ENCODE measurements at regions of chr10 and their contacts with region 1.

Region 1: DNA sequence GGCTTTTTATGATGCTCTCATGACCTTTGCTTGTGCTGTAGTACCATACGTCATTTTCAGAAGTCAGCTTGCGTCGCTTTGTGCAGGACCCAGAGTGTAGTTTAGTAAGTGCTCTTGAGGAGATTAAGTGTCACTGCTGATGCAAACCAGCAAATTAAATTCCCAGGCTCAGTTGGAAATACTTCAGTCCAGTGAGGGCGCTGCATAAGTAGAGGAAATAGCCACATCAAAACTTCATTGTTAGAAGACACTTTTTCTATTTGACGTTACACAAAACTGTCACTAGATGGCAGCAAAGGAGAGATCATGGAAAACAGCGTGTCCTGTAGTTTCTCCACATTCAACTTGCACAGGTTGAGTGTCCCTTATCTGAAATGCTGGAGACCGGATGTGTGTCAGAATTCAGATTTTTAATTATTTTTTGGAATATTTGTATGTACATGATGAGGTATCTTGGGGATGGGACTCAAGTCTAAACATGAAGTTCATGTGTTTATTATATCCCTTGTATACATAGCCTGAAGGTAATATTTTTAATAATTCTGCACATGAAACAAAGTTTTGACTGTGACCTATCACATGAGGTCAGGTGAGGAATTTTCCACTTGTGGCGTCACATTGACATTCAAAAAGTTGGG is 7.9 kb downstream of the ZNF22 start:
- DNase-seq: no peak
- ATAC-seq: peak; percentile 64 to 92 (median 86)
- H3K4me3 ChIP-seq: no peak overlapping the region
- H3K27ac ChIP-seq: no peak overlapping the region
- H3K4me1 ChIP-seq: peaks cover 0 to 20% (median 3%) of the 10 kb centered on the region in 12 donors
- H3K27me3 ChIP-seq: no peaks in the 10 kb centered on the region
- CTCF ChIP-seq: peak; percentile 65 to 93 (median 82)
- POLR2A ChIP-seq: no peak

Region 2: DNA sequence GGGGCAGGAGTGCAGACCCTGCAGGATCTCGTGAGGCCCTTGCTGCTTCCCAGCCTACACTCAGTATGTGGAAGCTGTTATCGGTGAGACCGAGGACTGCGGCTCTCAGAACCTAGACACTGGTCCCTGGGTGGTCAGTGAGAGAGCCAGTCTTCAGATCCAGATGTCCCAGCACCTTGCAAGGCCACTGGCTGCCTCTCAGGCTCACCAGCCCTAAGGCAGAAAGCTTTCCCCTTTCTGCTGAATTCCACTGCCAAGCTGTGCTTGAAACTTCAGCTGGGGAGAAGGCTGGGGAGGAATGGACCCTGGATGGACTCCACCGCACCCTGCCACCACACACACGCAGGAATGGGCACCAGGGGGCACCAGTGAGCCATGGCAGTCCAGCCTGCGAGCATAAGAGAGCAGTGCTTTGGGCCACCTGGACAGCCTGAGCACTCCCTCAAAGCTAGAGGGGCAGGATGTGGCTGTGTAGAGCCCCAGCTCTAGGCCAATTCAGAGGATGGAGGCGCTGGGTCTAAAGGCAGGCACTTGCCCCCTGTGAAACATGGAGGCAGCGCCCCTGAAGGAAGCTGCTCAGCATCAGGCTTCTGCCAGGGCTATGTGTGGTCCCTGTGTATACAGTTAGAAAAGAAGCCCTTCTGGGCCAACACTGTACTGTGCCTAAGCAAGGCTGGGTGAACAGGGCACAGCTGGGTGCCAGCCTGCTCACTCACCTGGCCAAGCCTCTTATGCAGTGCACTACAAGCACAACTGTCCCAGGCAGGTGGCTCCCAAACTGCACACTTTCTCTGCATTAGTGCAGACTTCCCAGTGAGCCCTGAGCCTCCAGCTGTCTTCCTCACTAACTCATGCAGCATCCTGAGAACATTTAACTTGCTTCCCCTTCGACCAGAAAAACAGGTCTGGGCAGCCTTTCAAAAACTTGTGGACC is 75.9 kb before region 1 on chr10:
- intact Hi-C with region 1: loop called in 2 of 10 experiments (anchors 2 kb)
- DNase-seq: peak; percentile 89 to 96 (median 92)
- ATAC-seq: peak; percentile 72 to 92 (median 90)
- H3K4me3 ChIP-seq: no peak overlapping the region
- H3K27ac ChIP-seq: peak overlapping the region in 2 of 12 donors; percentile 21 to 31
- H3K4me1 ChIP-seq: peaks cover 0 to 54% (median 39%) of the 10 kb centered on the region in 12 donors
- H3K27me3 ChIP-seq: no peaks in the 10 kb centered on the region
- CTCF ChIP-seq: peak; percentile 92 to 99 (median 98)
- POLR2A ChIP-seq: no peak

Region 3: GRCh38 chr10:44981172-44982113 is 27.2 kb before region 1 on chr10:
- intact Hi-C with region 1: no loop called
- DNase-seq: peak in 4 of 5 donors; percentile 60 to 79 (median 71)
- ATAC-seq: peak; percentile 14 to 61 (median 45)
- H3K4me3 ChIP-seq: no peak overlapping the region
- H3K27ac ChIP-seq: peak overlapping the region; percentile 63 to 97 (median 87)
- H3K4me1 ChIP-seq: peaks cover 14 to 100% (median 89%) of the 10 kb centered on the region in 12 donors
- H3K27me3 ChIP-seq: no peaks in the 10 kb centered on the region
- CTCF ChIP-seq: no peak
- POLR2A ChIP-seq: no peak

Region 4: GRCh38 chr10:45420453-45421192 is 412.0 kb after region 1 on chr10:
- intact Hi-C with region 1: loop called in 1 of 10 experiments (anchors 10 kb)
- DNase-seq: peak; percentile 78 to 91 (median 87)
- ATAC-seq: peak; percentile 11 to 61 (median 47)
- H3K4me3 ChIP-seq: peak overlapping the region in 6 of 12 donors; percentile 59 to 77 (median 72)
- H3K27ac ChIP-seq: peak overlapping the region; percentile 77 to 99 (median 92)
- H3K4me1 ChIP-seq: peaks cover 5 to 72% (median 24%) of the 10 kb centered on the region in 12 donors
- H3K27me3 ChIP-seq: no peaks in the 10 kb centered on the region
- CTCF ChIP-seq: no peak
- POLR2A ChIP-seq: no peak

Region 5: GRCh38 chr10:45594276-45595106 is 585.8 kb after region 1 on chr10:
- intact Hi-C with region 1: loop called in 1 of 10 experiments (anchors 10 kb)
- DNase-seq: peak; percentile 93 to 97 (median 95)
- ATAC-seq: peak; percentile 97 to 99 (median 98)
- H3K4me3 ChIP-seq: peak overlapping the region; percentile 63 to 97 (median 84)
- H3K27ac ChIP-seq: peak overlapping the region; percentile 2 to 87 (median 67)
- H3K4me1 ChIP-seq: peaks cover 0 to 29% (median 21%) of the 10 kb centered on the region in 12 donors
- H3K27me3 ChIP-seq: peaks cover 0 to 3% (median 0%) of the 10 kb centered on the region in 9 donors
- CTCF ChIP-seq: peak in 2 of 12 donors; percentile 28 to 34
- POLR2A ChIP-seq: peak in 1 of 2 donors; percentile 71

Region 6: DNA sequence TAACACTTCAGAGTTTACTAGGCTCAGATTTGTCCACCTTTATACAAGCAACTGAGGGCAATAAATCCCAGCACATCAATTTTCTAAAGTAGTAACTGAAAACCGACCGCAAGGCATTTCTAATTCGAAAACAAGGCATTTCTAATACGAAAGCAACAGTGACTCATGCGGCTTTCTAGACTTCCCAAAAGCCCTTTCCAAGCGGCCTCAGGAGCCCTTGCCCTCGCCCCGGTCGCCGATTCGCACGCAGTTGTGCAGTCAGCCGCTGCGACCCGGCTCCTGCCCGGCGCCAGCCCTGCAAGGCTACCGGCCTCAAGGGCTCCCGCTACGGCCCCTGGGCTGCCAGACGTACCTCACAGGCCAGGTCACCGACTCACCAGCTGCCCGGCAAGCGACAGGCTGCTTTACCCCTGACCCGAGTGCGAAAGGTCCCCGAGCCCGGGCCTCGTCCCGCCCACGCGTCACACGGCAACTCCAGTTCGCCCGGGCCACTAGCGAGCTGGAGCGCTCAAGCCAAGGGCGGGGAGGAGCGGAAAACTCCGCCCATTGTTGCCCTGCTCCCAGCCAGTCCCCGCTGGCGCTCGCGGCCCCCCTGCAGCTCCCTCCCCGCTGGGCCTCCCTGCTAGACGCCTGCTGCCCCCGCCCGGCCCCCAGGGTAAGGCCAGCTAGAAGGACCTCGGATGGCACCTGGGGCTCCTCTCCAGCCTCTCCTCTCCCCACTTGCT is 1014.5 kb after region 1 on chr10:
- intact Hi-C with region 1: loop called in 1 of 10 experiments (anchors 10 kb)
- DNase-seq: peak; percentile 94 to 97 (median 96)
- ATAC-seq: peak; percentile 92 to 97 (median 96)
- H3K4me3 ChIP-seq: peak overlapping the region; percentile 30 to 82 (median 69)
- H3K27ac ChIP-seq: peak overlapping the region; percentile 49 to 94 (median 88)
- H3K4me1 ChIP-seq: peaks cover 4 to 96% (median 85%) of the 10 kb centered on the region in 12 donors
- H3K27me3 ChIP-seq: no peaks in the 10 kb centered on the region
- CTCF ChIP-seq: peak in 10 of 12 donors; percentile 8 to 57 (median 26)
- POLR2A ChIP-seq: peak; percentile 11 to 67